A673 (cell line): ENCODE measurements at regions of chr19 and their contacts with region 1.

Region 1: DNA sequence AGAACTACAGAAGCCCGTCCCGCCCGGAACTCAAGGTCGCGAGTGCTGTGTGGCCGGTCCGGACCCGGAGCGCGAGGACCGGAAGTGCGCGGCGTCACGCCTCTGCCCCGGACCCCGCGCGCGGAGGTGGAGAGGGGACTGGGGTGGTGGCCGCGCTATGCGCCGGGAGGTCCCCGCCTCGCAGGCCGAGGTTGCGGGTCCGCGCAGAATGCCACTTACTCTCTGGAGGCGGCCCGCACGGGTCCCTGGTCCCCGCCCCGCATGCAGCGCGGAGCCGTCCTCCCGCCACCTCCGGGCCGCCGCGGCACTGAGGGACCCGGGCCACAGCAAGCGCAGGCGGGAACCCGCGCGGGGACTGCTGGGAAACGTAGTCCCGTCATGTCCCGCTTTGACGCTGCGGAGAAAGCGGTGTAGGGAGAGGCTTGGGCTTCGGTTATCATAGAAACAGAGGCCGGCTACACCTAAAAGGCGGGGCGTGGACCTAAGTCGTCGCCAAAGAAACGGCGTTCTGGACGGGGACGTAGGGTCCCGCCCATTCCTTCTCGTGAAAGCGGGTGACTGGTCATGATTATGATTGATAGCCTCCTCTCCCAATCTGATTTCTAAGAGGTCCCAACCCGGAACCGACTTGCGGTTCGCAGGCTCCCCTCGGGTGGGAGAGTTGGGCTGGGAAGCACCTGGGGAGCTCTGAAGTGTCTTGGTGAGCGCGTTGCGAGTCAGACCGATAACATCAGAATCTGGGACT is at the start of gene ZNF837:
- DNase-seq: peak; percentile 100
- H3K4me3 ChIP-seq: peak within 1 kb of the TSS; percentile 72
- H3K27ac ChIP-seq: peak within 1 kb of the TSS; percentile 96
- H3K4me1 ChIP-seq: peaks cover 5% of the 10 kb centered on the region
- H3K27me3 ChIP-seq: no peaks in the 10 kb centered on the region
- CTCF ChIP-seq: no peak
- total RNA-seq, gene ZNF837: 1.3 and 1.8 TPM in 2 replicates

Region 2: DNA sequence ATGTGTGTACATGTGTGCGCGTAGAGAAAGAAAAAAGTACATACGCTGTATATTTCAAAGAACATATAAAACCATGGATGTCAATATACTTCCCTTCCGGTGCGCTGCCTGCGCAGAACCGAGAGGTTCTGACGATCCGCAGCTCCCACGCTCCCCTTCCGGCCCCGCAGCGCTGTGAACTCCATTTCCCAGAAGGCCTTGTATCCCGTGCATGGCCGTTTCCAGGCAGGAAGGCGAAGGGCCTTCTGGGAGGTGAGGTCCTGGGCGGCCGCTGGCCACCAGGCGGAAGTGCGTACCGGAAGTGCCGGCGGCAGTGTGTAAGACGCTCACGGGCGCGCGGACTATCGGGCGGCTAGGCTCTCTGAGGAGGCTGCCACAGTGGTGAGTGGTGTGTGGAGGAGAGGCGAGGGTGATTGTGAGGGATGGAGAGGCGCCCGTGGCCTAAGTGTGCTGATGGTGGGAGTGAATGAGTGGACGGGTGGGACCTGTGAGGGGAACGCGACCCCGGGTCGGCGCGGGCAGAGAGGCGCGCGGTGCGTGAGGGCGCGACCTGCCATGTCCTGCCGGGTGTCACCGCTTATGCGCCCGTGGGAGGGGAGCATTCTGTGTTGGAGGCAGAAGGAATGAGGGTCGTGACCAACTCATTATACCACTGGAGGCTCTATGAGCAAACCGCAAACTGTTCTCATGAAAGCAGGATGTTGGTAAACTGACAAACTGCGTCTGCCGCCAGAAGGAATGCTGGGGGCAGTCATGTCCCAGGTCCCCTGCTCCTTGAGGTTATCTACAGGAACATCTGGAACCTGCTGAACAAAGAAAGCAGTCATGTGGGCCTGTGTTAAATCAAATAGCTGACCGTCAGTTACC is 75.6 kb before region 1 on chr19 and contains the start of gene ERVK3-1:
- CTCF ChIA-PET with region 1: no interaction called
- POLR2A ChIA-PET with region 1: no interaction called
- intact Hi-C with region 1: loop called (anchors 2 kb)
- DNase-seq: peak; percentile 99
- H3K4me3 ChIP-seq: peak within 1 kb of the TSS; percentile 83
- H3K27ac ChIP-seq: peak within 1 kb of the TSS; percentile 87
- H3K4me1 ChIP-seq: peaks cover 8% of the 10 kb centered on the region
- H3K27me3 ChIP-seq: no peaks in the 10 kb centered on the region
- CTCF ChIP-seq: no peak
- total RNA-seq, gene ERVK3-1: 57.8 and 77.1 TPM in 2 replicates

Region 3: DNA sequence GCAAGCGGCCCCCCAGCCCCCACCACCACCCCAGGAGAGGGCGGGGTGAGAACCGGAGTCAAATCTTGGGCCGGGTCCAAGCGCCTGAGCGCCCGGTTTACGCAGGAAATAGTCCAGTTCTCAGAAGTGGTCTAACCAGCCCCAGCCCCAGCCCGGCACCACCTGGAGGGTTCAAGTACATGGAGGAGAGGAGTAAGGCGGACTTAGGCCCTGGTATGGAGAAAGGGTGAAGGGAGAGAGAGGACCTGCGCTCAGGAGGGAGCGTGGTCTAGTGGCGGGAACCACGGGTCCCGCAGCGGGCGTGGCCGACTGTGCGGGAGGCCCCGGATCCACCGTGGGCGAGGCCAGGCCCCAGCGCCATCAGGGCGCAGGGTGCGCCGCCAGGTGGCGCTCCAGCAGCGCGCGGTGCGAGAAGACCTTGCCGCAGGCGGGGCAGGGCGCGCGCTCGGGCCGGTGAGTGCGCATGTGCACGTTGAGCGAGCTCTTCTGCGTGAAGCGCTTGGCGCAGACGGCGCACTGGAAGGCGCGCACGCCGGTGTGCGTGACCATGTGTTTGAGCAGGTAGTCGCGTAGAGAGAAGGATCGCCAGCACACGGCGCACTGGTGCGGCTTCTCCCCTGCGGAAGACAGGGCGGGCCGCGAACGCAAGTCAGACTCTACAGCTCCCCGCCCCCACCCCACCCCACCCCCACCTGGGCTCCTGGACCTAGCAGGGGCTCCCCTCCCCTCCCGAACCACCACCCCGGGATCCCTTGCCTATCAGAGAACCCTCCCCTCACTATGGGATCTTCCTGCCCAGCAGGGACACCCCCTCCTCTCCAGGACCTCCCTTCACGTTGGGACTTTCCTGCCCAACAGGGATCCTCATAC is 133.0 kb after region 1 on chr19:
- CTCF ChIA-PET with region 1: interaction called, 12 read pairs
- POLR2A ChIA-PET with region 1: no interaction called
- intact Hi-C with region 1: no loop called
- DNase-seq: peak; percentile 97
- H3K4me3 ChIP-seq: peak overlapping the region; percentile 49
- H3K27ac ChIP-seq: peak overlapping the region; percentile 77
- H3K4me1 ChIP-seq: peaks cover 24% of the 10 kb centered on the region
- H3K27me3 ChIP-seq: no peaks in the 10 kb centered on the region
- CTCF ChIP-seq: peak; percentile 87